ENCODE measurements at regions of chr6 and their contacts with region 1.

Region 1: GRCh38 chr6:38871741-38872568 is 156.8 kb downstream of the DNAH8 start:
- DNase-seq: no peak
- H3K4me3 ChIP-seq: no peak overlapping the region
- H3K27ac ChIP-seq: no peak overlapping the region
- H3K4me1 ChIP-seq: no peaks in the 10 kb centered on the region
- H3K27me3 ChIP-seq: peaks cover 0 to 5% (median 0%) of the 10 kb centered on the region in 3 donors
- CTCF ChIP-seq: peak; percentile 56 to 76 (median 66)
- EP300 ChIP-seq: no peak
- POLR2A ChIP-seq: no peak

Region 2: DNA sequence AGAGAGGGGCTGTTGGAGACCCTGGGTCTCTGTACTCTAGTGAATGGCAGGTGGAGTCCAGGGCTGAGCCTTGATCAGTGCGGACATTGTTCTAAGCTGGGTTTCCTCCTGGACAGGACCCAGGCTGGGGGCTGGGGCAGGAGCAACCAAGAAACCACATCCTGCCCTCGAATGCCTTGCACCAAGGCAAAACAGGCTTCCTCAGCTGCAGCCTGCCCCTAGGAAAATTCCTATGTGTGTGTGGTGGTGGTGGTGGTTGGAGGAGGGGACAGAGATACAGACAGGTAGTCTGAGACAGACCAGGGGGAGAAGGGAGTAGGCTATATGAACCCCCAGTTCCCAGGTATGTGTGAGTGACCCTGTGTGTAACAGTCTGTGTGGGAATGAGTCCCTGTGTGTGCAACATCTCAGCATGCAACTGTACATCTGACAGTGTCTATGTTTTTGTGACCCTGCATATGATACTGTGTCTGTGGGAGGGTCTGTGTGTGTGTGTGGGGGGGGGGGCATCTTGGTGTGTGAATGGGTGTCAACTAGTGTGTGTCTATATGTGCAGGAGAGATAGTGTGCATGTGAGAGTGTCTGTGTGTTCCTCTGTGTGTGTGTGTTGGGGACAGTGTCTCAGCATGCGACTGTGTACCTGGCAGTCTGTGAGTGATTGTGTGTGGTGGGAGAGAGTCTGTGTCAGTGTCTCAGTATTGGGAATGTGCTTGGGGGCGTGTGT is 179.6 kb after region 1 on chr6:
- intact Hi-C with region 1: no loop called
- DNase-seq: no peak
- H3K4me3 ChIP-seq: no peak overlapping the region
- H3K27ac ChIP-seq: no peak overlapping the region
- H3K4me1 ChIP-seq: peaks cover 0 to 11% (median 8%) of the 10 kb centered on the region in 4 donors
- H3K27me3 ChIP-seq: peaks cover 13 to 53% (median 31%) of the 10 kb centered on the region in 3 donors
- CTCF ChIP-seq: no peak
- EP300 ChIP-seq: no peak
- POLR2A ChIP-seq: no peak

Region 3: GRCh38 chr6:39309942-39310531 is 438.1 kb after region 1 on chr6:
- intact Hi-C with region 1: loop called (anchors 5 kb)
- DNase-seq: peak; percentile 77
- H3K4me3 ChIP-seq: no peak overlapping the region
- H3K27ac ChIP-seq: no peak overlapping the region
- H3K4me1 ChIP-seq: peaks cover 0 to 19% (median 15%) of the 10 kb centered on the region in 4 donors
- H3K27me3 ChIP-seq: peaks cover 21 to 50% (median 37%) of the 10 kb centered on the region in 3 donors
- CTCF ChIP-seq: peak; percentile 56 to 81 (median 75)
- EP300 ChIP-seq: no peak
- POLR2A ChIP-seq: no peak

Measured in sigmoid colon (tissue), 7 donors.